Activated CD8-positive, alpha-beta T cell treated with anti-CD3 and anti-CD28 coated beads, Interleukin-2, amount 10 ng/mL, durations not matched to agents 7 days and 5 days (primary cell): ENCODE measurements at regions of chr6 and their contacts with region 1.

Region 1: GRCh38 chr6:70955441-70956190 is 1.2 kb downstream of the B3GAT2 start:
- DNase-seq: peak; percentile 88
- ATAC-seq: peak; percentile 94
- H3K4me3 Mint-ChIP-seq: peak overlapping the region; percentile 70
- H3K27ac Mint-ChIP-seq: no peak overlapping the region
- H3K4me1 Mint-ChIP-seq: peaks cover 15% of the 10 kb centered on the region
- H3K27me3 Mint-ChIP-seq: peaks cover 77% of the 10 kb centered on the region

Region 2: GRCh38 chr6:70310063-70310694 is 645.4 kb before region 1 on chr6:
- CTCF ChIA-PET with region 1: interaction called, 19 read pairs
- POLR2A ChIA-PET with region 1: no interaction called
- DNase-seq: no peak
- ATAC-seq: no peak
- H3K4me3 Mint-ChIP-seq: no peak overlapping the region
- H3K27ac Mint-ChIP-seq: no peak overlapping the region
- H3K4me1 Mint-ChIP-seq: no peaks in the 10 kb centered on the region
- H3K27me3 Mint-ChIP-seq: peaks cover 20% of the 10 kb centered on the region

Region 3: DNA sequence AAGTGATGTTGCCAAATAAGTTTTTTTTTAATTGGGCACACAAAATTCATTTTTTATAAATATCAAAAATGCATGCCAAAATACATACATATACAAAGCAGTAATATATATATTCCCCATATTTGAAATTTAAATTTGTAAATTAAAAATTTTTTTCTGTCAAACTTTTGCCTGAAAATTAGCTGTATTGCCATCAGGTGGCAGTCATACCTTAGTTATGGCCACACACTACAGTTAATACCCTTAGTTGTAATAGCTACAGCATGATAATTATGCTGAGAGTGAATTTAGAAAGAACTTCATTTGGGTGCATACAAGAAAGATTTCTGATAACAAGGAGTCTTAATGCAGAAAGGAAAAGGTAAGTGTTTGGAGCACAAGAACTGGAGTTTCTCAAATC is 435.0 kb before region 1 on chr6:
- CTCF ChIA-PET with region 1: interaction called, 11 read pairs
- POLR2A ChIA-PET with region 1: no interaction called
- DNase-seq: peak; percentile 33
- ATAC-seq: no peak
- H3K4me3 Mint-ChIP-seq: no peak overlapping the region
- H3K27ac Mint-ChIP-seq: no peak overlapping the region
- H3K4me1 Mint-ChIP-seq: peaks cover 7% of the 10 kb centered on the region
- H3K27me3 Mint-ChIP-seq: no peaks in the 10 kb centered on the region

Region 4: DNA sequence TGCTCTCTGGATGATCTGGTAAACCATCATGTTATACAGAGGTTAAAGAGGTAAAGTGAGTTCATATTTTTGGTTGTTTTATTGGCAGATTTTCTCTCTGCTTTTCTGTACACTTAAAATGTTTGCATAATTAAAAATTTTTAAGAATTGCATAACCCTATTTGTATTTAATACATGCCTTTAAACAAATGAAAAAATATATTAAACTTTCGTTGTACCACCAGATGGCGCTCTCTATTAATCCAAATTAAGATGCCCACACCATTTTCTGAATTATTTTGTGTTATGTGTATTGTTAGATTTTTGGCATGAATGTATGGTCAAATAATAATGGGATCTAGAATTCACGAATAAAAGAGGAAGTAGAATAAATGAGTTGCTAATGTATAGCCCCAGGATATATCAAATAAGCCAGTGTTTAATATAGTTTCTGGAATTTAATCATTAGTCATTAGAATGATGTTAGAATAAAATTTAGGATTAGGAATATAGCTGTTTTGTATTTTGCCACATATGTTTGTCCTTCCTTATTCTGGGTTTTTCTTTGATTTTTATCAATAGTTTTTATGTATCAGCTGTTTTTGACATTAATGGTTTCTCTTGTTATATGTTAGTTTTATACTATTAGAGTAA is 249.0 kb before region 1 on chr6:
- CTCF ChIA-PET with region 1: interaction called, 32 read pairs
- POLR2A ChIA-PET with region 1: no interaction called
- DNase-seq: peak; percentile 28
- ATAC-seq: no peak
- H3K4me3 Mint-ChIP-seq: no peak overlapping the region
- H3K27ac Mint-ChIP-seq: no peak overlapping the region
- H3K4me1 Mint-ChIP-seq: peaks cover 8% of the 10 kb centered on the region
- H3K27me3 Mint-ChIP-seq: no peaks in the 10 kb centered on the region